AG04450 (cell line): ENCODE measurements at regions of chr21 and their contacts with region 1.

Region 1: GRCh38 chr21:33360881-33361602 is 36.3 kb downstream of the IFNAR1 start:
- DNase-seq: no peak
- H3K4me3 ChIP-seq: no peak overlapping the region
- H3K27ac ChIP-seq: peak overlapping the region; percentile 70
- H3K27me3 ChIP-seq: no peaks in the 10 kb centered on the region
- CTCF ChIP-seq: peak; percentile 79

Region 2: GRCh38 chr21:33314111-33314510 is 46.9 kb before region 1 on chr21:
- CTCF ChIA-PET with region 1: interaction called, 12 read pairs
- POLR2A ChIA-PET with region 1: no interaction called
- DNase-seq: no peak
- H3K4me3 ChIP-seq: no peak overlapping the region
- H3K27ac ChIP-seq: no peak overlapping the region
- H3K27me3 ChIP-seq: peaks cover 15% of the 10 kb centered on the region
- CTCF ChIP-seq: no peak

Region 3: GRCh38 chr21:33374450-33375096 is 13.5 kb after region 1 on chr21:
- CTCF ChIA-PET with region 1: interaction called, 26 read pairs
- POLR2A ChIA-PET with region 1: no interaction called
- DNase-seq: no peak
- H3K4me3 ChIP-seq: no peak overlapping the region
- H3K27ac ChIP-seq: no peak overlapping the region
- H3K27me3 ChIP-seq: no peaks in the 10 kb centered on the region
- CTCF ChIP-seq: peak; percentile 65

Region 4: DNA sequence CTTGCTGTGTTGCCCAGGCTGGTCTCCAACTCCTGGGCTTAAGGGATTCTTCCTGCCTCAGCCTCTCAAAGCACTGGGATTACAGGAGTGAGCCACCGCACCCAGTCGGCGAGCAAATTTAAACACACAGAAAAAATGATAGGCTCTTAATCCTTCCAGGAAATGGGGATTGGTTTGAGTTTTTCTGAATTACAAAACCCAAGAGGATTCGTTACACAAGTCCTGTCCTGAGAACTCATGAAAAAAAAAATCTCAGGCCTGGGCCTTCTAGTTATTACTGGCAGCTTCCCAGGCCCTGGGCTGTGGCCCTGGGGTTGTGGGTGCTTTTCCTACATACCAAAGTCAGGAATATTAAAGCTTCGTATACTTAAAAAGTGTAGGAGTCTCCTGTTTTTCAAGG is 35.9 kb after region 1 on chr21:
- CTCF ChIA-PET with region 1: interaction called, 11 read pairs
- POLR2A ChIA-PET with region 1: no interaction called
- DNase-seq: no peak
- H3K4me3 ChIP-seq: no peak overlapping the region
- H3K27ac ChIP-seq: peak overlapping the region; percentile 39
- H3K27me3 ChIP-seq: no peaks in the 10 kb centered on the region
- CTCF ChIP-seq: no peak

Region 5: GRCh38 chr21:33578959-33579542 is 218.0 kb after region 1 on chr21:
- CTCF ChIA-PET with region 1: no interaction called
- POLR2A ChIA-PET with region 1: no interaction called
- DNase-seq: no peak
- H3K4me3 ChIP-seq: no peak overlapping the region
- H3K27ac ChIP-seq: no peak overlapping the region
- H3K27me3 ChIP-seq: no peaks in the 10 kb centered on the region
- CTCF ChIP-seq: no peak